Activated CD4-positive, alpha-beta T cell treated with anti-CD3 and anti-CD28 coated beads for 36 hours (primary cell): ENCODE measurements at regions of chr9 and their contacts with region 1.

Region 1: GRCh38 chr9:7976167-7976755 is 176.7 kb upstream of the DMAC1 start:
- DNase-seq: peak; percentile 60
- ATAC-seq: peak; percentile 95
- H3K4me3 Mint-ChIP-seq: peak overlapping the region; percentile 32
- H3K27ac Mint-ChIP-seq: peak overlapping the region; percentile 82
- H3K4me1 Mint-ChIP-seq: peaks cover 62% of the 10 kb centered on the region
- H3K27me3 Mint-ChIP-seq: no peaks in the 10 kb centered on the region

Region 2: DNA sequence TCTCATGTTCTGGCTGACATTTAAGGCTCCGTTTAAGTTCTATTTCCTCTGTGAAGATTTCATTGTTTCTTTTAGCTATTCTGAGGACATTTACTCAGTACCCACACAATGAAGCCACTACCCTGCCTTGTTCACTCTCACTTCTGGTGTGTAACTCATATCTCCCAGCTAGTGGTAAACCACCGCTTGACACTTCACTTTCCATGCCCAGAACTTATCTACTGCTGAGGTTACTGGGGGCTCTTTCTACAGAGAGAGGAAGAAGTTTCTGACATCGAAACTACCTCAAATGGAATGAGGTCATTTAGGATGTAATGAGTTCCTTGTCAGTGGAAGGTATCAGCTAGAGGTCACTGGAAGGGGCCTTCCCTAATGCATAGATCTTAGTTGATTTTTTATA is 678.1 kb before region 1 on chr9:
- CTCF ChIA-PET with region 1: no interaction called
- POLR2A ChIA-PET with region 1: no interaction called
- intact Hi-C with region 1: loop called (anchors 1 kb)
- DNase-seq: peak; percentile 76
- ATAC-seq: peak; percentile 95
- H3K4me3 Mint-ChIP-seq: no peak overlapping the region
- H3K27ac Mint-ChIP-seq: peak overlapping the region; percentile 7
- H3K4me1 Mint-ChIP-seq: peaks cover 20% of the 10 kb centered on the region
- H3K27me3 Mint-ChIP-seq: peaks cover 29% of the 10 kb centered on the region

Region 3: GRCh38 chr9:7592321-7593316 is 383.6 kb before region 1 on chr9:
- CTCF ChIA-PET with region 1: no interaction called
- POLR2A ChIA-PET with region 1: no interaction called
- intact Hi-C with region 1: no loop called
- DNase-seq: no peak
- ATAC-seq: no peak
- H3K4me3 Mint-ChIP-seq: no peak overlapping the region
- H3K27ac Mint-ChIP-seq: no peak overlapping the region
- H3K4me1 Mint-ChIP-seq: no peaks in the 10 kb centered on the region
- H3K27me3 Mint-ChIP-seq: no peaks in the 10 kb centered on the region

Region 4: GRCh38 chr9:7799234-7799943 is 176.9 kb before region 1 on chr9 and contains the start of gene DMAC1:
- CTCF ChIA-PET with region 1: no interaction called
- POLR2A ChIA-PET with region 1: no interaction called
- intact Hi-C with region 1: loop called in 1 of 2 experiments (anchors 1 kb)
- DNase-seq: peak; percentile 86
- ATAC-seq: peak; percentile 88
- H3K4me3 Mint-ChIP-seq: peak within 1 kb of the TSS; percentile 94
- H3K27ac Mint-ChIP-seq: peak within 1 kb of the TSS; percentile 96
- H3K4me1 Mint-ChIP-seq: peaks cover 27% of the 10 kb centered on the region
- H3K27me3 Mint-ChIP-seq: no peaks in the 10 kb centered on the region
- total RNA-seq, gene DMAC1: 34.5 to 49.3 TPM

Region 5: DNA sequence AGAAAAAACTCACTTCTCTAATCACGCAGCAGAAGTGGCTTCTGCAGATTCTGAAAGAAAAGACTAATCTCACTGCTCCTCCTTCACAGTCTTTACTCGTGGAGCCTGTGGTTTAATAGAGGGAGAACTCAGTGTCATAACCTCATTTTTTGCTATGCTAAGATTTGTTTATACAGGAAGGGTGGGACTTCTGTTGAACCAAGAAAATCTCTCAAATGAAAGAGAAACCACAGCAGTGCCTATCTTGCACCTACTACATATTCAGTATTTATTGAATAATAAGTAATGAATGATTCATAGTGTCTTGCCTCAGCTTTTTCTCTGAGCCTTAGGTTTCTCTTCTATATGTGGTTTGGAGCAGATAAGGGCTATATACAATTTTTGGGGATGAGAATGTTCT is 40.6 kb before region 1 on chr9:
- CTCF ChIA-PET with region 1: no interaction called
- POLR2A ChIA-PET with region 1: no interaction called
- intact Hi-C with region 1: loop called (anchors 1 to 2 kb)
- DNase-seq: no peak
- ATAC-seq: peak; percentile 83
- H3K4me3 Mint-ChIP-seq: no peak overlapping the region
- H3K27ac Mint-ChIP-seq: peak overlapping the region; percentile 90
- H3K4me1 Mint-ChIP-seq: peaks cover 27% of the 10 kb centered on the region
- H3K27me3 Mint-ChIP-seq: no peaks in the 10 kb centered on the region

Region 6: DNA sequence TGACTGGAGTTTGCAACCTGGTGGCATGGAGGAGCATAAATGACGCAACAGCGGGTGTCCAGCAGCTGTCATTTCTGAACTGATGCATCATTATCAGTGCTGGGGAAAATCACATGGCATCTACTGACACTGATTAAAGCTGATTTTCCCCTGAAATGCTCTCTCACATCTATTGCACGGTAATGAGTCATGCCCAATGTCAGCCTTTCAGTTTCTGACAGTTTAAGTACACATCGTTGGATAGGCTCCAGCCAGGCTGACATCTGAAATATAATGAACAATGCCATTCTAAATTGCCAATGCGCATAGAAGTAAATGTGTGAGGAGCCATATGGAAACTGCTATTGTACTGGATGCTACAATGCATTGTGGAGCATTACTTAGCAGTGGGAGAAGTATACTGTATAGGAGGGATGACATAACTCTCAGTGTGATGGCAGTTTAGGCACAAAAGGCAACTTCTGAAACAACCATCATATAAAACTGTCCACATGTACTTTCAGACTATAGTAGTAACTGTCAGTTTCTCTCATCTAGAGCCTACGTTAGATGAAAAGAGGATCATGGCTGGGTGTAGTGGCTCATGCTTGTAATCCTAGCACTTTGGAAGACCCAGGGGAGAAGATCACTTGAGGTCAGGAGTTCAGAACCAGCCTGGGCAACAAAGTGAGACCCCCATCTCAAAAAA is 212.6 kb after region 1 on chr9:
- CTCF ChIA-PET with region 1: no interaction called
- POLR2A ChIA-PET with region 1: no interaction called
- intact Hi-C with region 1: loop called (anchors 1 to 5 kb)
- DNase-seq: peak; percentile 61
- ATAC-seq: peak; percentile 94
- H3K4me3 Mint-ChIP-seq: no peak overlapping the region
- H3K27ac Mint-ChIP-seq: no peak overlapping the region
- H3K4me1 Mint-ChIP-seq: peaks cover 13% of the 10 kb centered on the region
- H3K27me3 Mint-ChIP-seq: peaks cover 2% of the 10 kb centered on the region

Region 7: DNA sequence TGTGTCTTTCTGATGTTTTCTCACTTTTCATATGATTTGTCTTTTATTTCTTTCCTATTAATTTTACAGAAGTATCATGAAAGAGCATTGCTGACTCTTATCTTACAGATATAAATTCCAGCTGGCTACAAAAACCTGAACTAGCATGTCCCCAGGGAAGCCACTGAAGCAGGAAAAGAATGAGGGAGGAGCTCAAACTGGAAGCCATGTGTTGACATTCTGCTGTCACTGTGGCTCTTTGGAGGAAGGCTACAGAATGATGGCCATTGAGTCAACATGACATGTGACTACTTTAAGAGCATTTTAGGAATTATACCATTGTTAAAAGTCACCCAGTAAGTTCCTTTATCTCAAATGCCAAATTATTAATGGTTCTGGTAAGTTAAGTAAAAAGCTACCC is 461.6 kb after region 1 on chr9:
- CTCF ChIA-PET with region 1: no interaction called
- POLR2A ChIA-PET with region 1: no interaction called
- intact Hi-C with region 1: loop called (anchors 2 to 10 kb)
- DNase-seq: no peak
- ATAC-seq: no peak
- H3K4me3 Mint-ChIP-seq: no peak overlapping the region
- H3K27ac Mint-ChIP-seq: no peak overlapping the region
- H3K4me1 Mint-ChIP-seq: peaks cover 12% of the 10 kb centered on the region
- H3K27me3 Mint-ChIP-seq: peaks cover 2% of the 10 kb centered on the region